Gastrocnemius medialis (tissue), 4 donors: ENCODE measurements at regions of chr1 and their contacts with region 1.

Region 1: GRCh38 chr1:167059045-167059808 is 30.9 kb downstream of the GPA33 start:
- DNase-seq: peak in 1 of 2 donors; percentile 55
- ATAC-seq: peak; percentile 46 to 76
- H3K4me3 ChIP-seq: peak overlapping the region in 1 of 4 donors; percentile 22
- H3K27ac ChIP-seq: peak overlapping the region; percentile 7 to 47 (median 40)
- H3K4me1 ChIP-seq: peaks cover 3 to 7% of the 10 kb centered on the region in 2 donors
- H3K27me3 ChIP-seq: no peaks in the 10 kb centered on the region
- CTCF ChIP-seq: peak; percentile 89 to 94 (median 91)
- POLR2A ChIP-seq: no peak

Region 2: GRCh38 chr1:166785987-166786386 is 273.2 kb before region 1 on chr1:
- in situ Hi-C with region 1: no loop called
- intact Hi-C with region 1: loop called (anchors 2 kb)
- DNase-seq: no peak
- ATAC-seq: no peak
- H3K4me3 ChIP-seq: no peak overlapping the region
- H3K27ac ChIP-seq: no peak overlapping the region
- H3K4me1 ChIP-seq: no peaks in the 10 kb centered on the region
- H3K27me3 ChIP-seq: no peaks in the 10 kb centered on the region
- CTCF ChIP-seq: no peak
- POLR2A ChIP-seq: no peak

Region 3: GRCh38 chr1:166884040-166884642 is 175.1 kb before region 1 on chr1:
- in situ Hi-C with region 1: no loop called
- intact Hi-C with region 1: loop called (anchors 2 kb)
- DNase-seq: no peak
- ATAC-seq: no peak
- H3K4me3 ChIP-seq: no peak overlapping the region
- H3K27ac ChIP-seq: no peak overlapping the region
- H3K4me1 ChIP-seq: no peaks in the 10 kb centered on the region
- H3K27me3 ChIP-seq: peaks cover 9 to 15% (median 12%) of the 10 kb centered on the region in 3 donors
- CTCF ChIP-seq: peak in 4 of 5 experiments; percentile 37 to 59 (median 50)
- POLR2A ChIP-seq: no peak

Region 4: GRCh38 chr1:166910396-166910994 is 148.7 kb before region 1 on chr1:
- in situ Hi-C with region 1: loop called in 3 of 4 experiments (anchors 10 kb)
- intact Hi-C with region 1: loop called (anchors 1 kb)
- DNase-seq: peak; percentile 36 to 53
- ATAC-seq: peak; percentile 93 to 94
- H3K4me3 ChIP-seq: no peak overlapping the region
- H3K27ac ChIP-seq: no peak overlapping the region
- H3K4me1 ChIP-seq: no peaks in the 10 kb centered on the region
- H3K27me3 ChIP-seq: no peaks in the 10 kb centered on the region
- CTCF ChIP-seq: peak; percentile 33 to 63 (median 52)
- POLR2A ChIP-seq: no peak

Region 5: DNA sequence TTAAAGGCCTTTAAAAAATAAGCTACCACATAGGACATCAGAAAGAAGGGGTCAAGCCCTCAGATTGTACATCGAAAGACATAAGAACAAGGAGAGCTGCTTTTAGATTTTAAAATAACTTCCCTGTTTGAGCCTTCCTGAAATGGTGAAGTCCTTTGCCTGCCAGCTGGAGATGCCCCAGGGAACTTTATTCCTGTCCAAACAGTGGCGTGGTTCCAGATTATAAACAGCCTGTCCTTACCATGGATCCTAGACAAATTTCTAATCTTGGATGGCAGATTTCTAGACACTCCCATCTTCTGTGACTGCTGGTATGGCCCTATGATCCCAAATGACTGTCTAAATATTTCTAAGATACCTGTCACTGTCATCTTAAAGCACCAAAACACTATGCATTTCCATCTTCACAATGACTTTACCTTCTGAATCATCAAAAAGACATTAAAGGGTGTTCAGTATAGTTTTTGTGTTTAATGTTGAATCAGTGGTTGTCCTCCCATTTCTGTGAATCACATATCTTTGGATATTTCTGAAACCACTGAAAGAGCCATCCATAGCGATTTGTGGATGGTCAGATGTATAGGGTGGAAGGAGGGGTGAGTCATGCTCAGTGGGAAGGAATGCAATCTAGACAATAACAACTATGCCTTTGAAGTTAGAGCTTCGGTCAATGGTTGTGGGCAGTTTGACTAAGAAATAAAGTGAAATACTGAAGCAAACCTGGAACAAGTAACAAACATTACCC is 107.1 kb before region 1 on chr1:
- in situ Hi-C with region 1: no loop called
- intact Hi-C with region 1: no loop called
- DNase-seq: no peak
- ATAC-seq: no peak
- H3K4me3 ChIP-seq: no peak overlapping the region
- H3K27ac ChIP-seq: no peak overlapping the region
- H3K4me1 ChIP-seq: peaks cover 0 to 5% of the 10 kb centered on the region in 2 donors
- H3K27me3 ChIP-seq: peaks cover 0 to 9% (median 3%) of the 10 kb centered on the region in 3 donors
- CTCF ChIP-seq: no peak
- POLR2A ChIP-seq: no peak

Region 6: DNA sequence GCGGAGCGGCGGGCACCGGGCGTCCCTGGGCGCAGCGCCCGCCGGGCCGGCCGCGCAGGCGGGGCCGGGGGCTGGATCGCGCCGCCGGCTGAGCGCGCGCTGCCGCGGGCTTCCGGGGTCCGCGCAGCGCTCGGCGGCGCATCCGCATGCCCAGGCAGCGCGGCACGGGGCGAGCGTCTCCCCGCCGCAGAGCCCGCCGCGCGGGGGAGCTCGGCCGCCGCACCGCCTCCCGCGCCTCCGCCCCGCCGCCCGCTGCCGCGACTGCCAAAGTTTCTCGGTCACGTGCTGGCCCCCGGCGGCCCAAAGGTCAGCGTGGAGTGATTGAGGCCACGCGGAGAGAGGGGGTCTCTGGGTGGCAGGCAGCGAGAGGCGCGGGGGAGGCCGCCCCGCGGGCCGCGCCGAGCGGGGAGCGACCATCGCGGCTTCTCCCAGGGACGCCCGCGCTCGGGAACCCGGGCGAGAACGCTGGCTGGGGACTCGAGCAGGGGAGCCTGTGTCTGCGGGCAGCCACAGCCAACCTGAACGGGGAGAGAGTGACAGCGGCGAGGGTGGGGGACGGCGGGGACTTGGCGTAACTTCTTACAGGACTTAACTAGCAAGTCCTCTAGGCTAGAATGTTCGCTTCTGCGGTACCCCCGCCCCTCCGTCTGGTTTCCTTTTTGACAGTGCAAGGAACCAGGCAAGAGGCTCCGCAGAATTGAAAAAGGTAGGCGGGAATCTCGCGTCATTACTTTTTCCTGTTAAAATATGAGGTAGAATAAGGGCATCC is 83.7 kb before region 1 on chr1 and contains the start of gene ILDR2:
- in situ Hi-C with region 1: no loop called
- intact Hi-C with region 1: loop called (anchors 1 kb)
- DNase-seq: peak in 1 of 2 donors; percentile 23
- ATAC-seq: peak; percentile 74 to 77
- H3K4me3 ChIP-seq: peak within 1 kb of the TSS; percentile 65 to 82 (median 74)
- H3K27ac ChIP-seq: peak within 1 kb of the TSS; percentile 26 to 71 (median 48)
- H3K4me1 ChIP-seq: peaks cover 4 to 9% of the 10 kb centered on the region in 2 donors
- H3K27me3 ChIP-seq: peaks cover 10 to 33% (median 19%) of the 10 kb centered on the region in 3 donors
- CTCF ChIP-seq: peak in 1 of 5 experiments; percentile 24
- POLR2A ChIP-seq: no peak
- total RNA-seq, gene ILDR2: 0.10 to 0.47 (median 0.25) TPM